Activated naive CD8-positive, alpha-beta T cell treated with anti-CD3 and anti-CD28 coated beads, Interleukin-2, amount 10 ng/mL, durations not matched to agents 7 days and 5 days (primary cell): ENCODE measurements at regions of chr12 and their contacts with region 1.

Region 1: DNA sequence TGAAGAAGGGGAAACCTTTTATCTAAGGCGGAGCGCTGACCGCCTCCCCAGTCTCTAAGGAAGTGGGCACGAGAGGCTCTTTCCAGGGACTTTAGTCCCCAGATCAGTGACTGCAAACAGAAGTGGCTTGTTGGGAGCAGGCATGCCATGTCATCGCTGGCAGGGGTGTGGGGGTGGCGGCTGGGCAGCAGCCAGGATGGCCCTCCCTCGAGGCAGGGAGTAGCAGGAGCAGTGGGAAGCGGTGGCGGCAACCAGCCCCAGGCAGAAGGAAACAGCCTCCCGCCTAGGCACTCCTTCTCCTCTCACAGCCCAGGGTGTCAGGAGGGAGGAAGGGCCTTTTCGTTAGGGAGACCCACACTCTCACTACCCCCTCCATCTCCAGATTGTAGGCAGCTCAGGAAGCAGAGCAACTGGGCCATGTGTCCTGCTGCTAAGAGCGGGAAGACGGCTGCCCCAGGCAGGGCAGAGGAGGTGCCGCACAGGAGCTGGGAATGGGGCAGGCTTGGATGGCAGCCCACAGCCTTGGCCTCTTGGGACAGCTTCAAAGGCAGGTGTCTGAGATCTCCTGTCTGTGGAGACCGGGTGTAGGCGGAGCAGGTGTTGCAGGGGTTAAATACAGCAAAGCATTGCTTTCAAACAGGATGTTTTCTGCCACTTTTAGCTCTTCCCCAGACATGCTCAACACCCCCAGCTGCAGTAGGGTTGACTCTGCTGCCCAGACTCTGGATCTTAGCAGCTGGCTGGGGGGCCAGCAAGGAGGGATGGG is 21.8 kb downstream of the VDR start:
- DNase-seq: no peak
- ATAC-seq: peak; percentile 56
- H3K4me3 Mint-ChIP-seq: peak overlapping the region; percentile 87
- H3K27ac Mint-ChIP-seq: peak overlapping the region; percentile 93
- H3K4me1 Mint-ChIP-seq: peaks cover 64% of the 10 kb centered on the region
- H3K27me3 Mint-ChIP-seq: no peaks in the 10 kb centered on the region

Region 2: DNA sequence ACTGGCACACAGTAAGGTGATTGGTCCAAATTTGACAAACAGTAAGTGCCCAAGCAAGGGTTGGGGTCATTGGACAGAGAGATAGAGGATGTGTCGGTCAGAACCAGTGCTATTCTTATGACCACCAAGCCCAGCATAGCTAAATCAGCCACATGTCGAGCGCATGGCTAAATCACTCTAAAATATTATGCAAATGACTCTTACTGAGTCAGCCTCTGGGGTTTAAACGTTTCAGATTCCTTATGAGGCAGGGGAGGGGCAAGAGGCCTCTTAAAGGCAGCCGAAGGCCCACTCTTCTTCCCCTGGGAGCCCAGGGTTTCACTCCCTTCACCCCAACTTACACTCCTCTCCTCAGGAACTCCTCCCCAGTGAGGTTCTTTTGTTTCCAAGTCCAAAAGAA is 157.1 kb before region 1 on chr12:
- POLR2A ChIA-PET with region 1: no interaction called
- DNase-seq: no peak
- ATAC-seq: no peak
- H3K4me3 Mint-ChIP-seq: no peak overlapping the region
- H3K27ac Mint-ChIP-seq: no peak overlapping the region
- H3K4me1 Mint-ChIP-seq: peaks cover 52% of the 10 kb centered on the region
- H3K27me3 Mint-ChIP-seq: no peaks in the 10 kb centered on the region

Region 3: DNA sequence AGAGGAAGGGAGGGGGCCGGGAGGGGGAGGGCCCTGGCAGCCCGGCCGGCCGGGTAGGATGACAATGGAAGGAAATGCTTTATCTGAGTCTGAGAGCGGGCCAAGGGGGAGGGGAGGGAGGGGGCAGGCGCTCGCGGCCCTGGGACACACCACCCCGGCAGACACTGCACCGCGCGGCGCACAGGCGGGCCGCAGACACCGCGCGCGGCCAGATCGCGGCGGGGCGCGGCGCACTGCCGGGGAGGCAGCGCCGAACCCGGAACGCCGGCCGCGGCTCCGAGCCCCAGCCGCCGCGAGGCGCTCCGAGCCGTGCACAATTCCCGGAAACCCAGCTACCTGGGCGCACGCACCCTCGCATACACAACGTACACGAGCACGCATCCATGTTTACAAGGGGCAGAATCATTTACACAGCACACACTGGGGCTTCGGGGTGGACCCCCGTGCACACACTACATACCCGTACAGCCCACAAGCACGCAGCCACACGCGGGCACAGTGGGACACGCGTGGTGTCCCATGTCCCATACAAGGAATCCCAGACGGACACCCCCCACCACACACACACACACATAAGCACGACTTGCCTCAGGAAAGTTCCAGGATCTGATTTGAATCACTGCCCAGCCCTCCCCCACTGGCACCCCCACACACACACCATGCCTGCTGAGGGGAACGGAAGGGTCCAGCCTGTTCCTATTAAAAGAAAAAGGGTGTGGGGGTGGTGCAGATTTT is 62.9 kb before region 1 on chr12 and contains the start of gene HDAC7:
- POLR2A ChIA-PET with region 1: interaction called, 13 read pairs
- DNase-seq: peak; percentile 81
- ATAC-seq: peak; percentile 58
- H3K4me3 Mint-ChIP-seq: peak within 1 kb of the TSS; percentile 89
- H3K27ac Mint-ChIP-seq: peak within 1 kb of the TSS; percentile 98
- H3K4me1 Mint-ChIP-seq: peaks cover 58% of the 10 kb centered on the region
- H3K27me3 Mint-ChIP-seq: no peaks in the 10 kb centered on the region
- total RNA-seq, gene HDAC7: 200 to 215 TPM

Region 4: DNA sequence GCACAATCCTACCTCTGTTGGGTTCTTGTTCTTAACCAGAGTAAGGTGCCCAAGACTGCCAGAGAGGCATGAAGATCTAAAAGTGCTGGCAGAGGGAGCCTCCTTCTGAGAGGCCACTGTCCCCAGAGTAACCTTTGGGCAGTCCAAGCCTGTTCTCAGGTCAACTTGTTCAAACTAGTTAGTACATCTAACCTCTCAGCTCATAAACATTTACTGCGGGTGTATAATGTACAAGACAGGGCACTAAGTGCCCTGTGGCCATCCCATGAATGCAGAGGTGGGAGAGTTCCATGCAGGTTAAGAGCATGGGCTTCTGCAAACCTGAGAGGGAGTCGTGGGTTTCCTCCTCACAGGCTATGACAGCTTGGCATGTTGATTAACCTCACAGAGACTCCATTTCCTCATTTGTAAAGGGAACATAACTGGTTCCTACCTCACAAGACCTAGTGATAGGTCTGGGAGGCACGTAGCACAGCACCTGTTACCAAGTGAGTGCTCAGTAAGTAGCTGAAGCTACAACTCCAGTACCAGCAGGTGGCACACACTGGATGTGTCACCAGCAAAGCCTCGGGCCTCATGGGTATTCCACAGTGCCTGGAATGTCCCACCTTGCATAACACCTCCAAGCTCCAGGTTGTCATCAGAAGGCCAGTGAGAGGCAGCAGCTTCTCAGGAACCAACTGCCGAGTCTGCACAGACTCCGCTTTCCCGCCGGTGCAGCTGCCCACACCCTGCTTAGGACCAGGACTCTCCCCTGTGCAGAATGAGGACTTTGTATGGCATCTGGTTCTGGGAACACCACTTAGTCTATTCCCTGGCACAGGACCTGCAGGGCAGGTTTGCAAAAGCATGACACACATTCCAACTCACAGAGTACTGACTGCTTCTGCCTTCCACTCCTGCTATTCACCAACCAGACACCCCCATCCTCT is 17.4 kb after region 1 on chr12:
- POLR2A ChIA-PET with region 1: interaction called, 12 read pairs
- DNase-seq: no peak
- ATAC-seq: no peak
- H3K4me3 Mint-ChIP-seq: peak overlapping the region; percentile 64
- H3K27ac Mint-ChIP-seq: peak overlapping the region; percentile 48
- H3K4me1 Mint-ChIP-seq: peaks cover 74% of the 10 kb centered on the region
- H3K27me3 Mint-ChIP-seq: peaks cover 1% of the 10 kb centered on the region